ENCODE measurements at regions of chr10 and their contacts with region 1.

Region 1: GRCh38 chr10:51699475-51700227 is at the start of gene CSTF2T:
- DNase-seq: peak; percentile 90 to 98
- ATAC-seq: peak; percentile 86 to 94 (median 90)
- H3K4me3 ChIP-seq: peak within 1 kb of the TSS; percentile 78
- H3K4me3 Mint-ChIP-seq: peak within 1 kb of the TSS; percentile 99
- H3K27ac ChIP-seq: peak within 1 kb of the TSS; percentile 93
- H3K27ac Mint-ChIP-seq: peak within 1 kb of the TSS; percentile 98 to 100
- H3K4me1 ChIP-seq: peaks cover 24% of the 10 kb centered on the region
- H3K4me1 Mint-ChIP-seq: peaks cover 50 to 53% of the 10 kb centered on the region in 2 donors
- H3K27me3 ChIP-seq: no peaks in the 10 kb centered on the region
- H3K27me3 Mint-ChIP-seq: no peaks in the 10 kb centered on the region
- CTCF ChIP-seq: no peak
- total RNA-seq, gene CSTF2T: 29.8 to 34.8 (median 32.8) TPM

Region 2: DNA sequence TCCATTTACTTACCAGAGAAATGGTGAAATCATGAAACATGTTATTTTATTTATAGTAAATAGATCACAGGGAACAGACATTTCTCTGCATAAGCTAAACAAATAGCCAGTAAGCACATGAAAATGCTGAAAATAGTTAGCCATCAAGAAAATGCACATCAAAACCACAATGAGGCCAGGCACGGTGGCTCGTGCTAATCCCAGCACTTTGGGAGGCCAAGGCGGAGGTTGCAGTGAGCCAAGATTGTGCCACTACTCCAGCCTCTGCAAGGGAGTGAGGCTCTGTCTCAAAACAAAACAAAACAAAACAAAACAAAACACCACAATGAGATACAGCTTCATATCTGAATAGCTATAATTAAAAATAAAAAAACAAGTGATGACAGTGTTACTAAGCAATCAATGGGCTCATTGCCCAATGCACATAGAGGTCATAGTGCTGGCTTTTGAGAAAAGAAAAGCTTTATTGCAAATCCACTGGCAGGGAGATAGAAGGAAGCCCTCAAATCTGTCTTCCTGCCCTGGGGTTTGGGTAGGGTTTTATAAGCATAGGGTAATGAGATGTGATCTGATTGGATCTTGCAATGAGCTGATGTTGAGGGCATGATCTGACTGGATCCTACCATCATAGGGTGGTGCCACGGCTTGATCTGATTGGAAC is 16.5 kb before region 1 on chr10:
- intact Hi-C with region 1: no loop called
- DNase-seq: no peak
- ATAC-seq: no peak
- H3K4me3 ChIP-seq: no peak overlapping the region
- H3K4me3 Mint-ChIP-seq: no peak overlapping the region
- H3K27ac ChIP-seq: no peak overlapping the region
- H3K27ac Mint-ChIP-seq: no peak overlapping the region
- H3K4me1 ChIP-seq: no peaks in the 10 kb centered on the region
- H3K4me1 Mint-ChIP-seq: no peaks in the 10 kb centered on the region
- H3K27me3 ChIP-seq: no peaks in the 10 kb centered on the region
- H3K27me3 Mint-ChIP-seq: peaks cover 9 to 39% of the 10 kb centered on the region in 2 donors
- CTCF ChIP-seq: no peak

Region 3: DNA sequence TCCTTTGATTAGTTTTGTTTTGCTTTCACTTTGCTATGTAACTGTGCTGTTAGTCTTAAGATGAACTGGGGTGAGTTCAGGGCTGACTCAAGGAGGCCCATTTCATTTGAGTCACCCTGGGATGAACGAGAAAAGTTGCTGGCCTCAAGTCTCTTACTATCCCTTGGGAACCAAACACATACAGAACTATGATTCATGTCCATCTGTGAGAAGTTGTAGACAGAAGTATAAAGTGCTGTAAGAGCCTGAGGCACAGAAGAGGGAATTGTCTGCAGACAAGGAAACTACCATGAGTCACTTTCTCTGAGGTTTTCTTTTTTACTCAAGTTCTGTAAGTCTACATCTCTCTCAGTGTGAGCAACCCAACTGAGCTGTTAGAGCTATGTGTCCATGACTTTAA is 179.6 kb after region 1 on chr10:
- intact Hi-C with region 1: loop called (anchors 10 kb)
- DNase-seq: peak in 1 of 2 donors; percentile 7
- ATAC-seq: peak; percentile 54 to 88 (median 68)
- H3K4me3 ChIP-seq: no peak overlapping the region
- H3K4me3 Mint-ChIP-seq: peak overlapping the region; percentile 59
- H3K27ac ChIP-seq: peak overlapping the region; percentile 40
- H3K27ac Mint-ChIP-seq: peak overlapping the region; percentile 85 to 87
- H3K4me1 ChIP-seq: no peaks in the 10 kb centered on the region
- H3K4me1 Mint-ChIP-seq: peaks cover 12 to 15% of the 10 kb centered on the region in 2 donors
- H3K27me3 ChIP-seq: no peaks in the 10 kb centered on the region
- H3K27me3 Mint-ChIP-seq: no peaks in the 10 kb centered on the region
- CTCF ChIP-seq: no peak